ENCODE measurements at regions of chr10 and their contacts with region 1.

Region 1: DNA sequence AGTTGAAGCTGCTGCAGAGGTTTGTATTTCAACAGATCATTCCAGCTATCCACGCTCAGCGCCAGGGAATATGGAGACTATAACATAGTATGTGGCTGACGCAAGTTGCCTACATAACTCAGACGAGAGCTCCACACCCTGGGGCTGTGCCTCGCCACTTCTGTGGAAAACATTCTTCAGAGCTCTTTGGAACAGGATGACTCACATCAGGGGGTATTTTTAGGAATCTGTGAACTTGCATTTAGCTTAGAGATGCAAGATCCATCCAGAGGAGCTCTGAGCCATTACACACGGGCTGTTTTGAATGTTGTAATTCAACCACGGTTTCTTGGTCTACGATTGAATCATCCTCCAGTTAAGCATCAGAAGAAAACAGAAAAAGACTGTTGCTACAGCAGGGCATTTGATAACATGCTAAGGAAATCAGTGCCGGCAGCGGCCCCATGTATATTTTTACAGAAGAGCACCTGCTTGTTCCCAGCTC is 481.5 kb upstream of the AKR1E2 start:
- DNase-seq: no peak
- H3K4me3 ChIP-seq: peak overlapping the region in 1 of 4 donors; percentile 1
- H3K27ac ChIP-seq: peak overlapping the region; percentile 71 to 83 (median 78)
- H3K4me1 ChIP-seq: peaks cover 21 to 32% (median 31%) of the 10 kb centered on the region in 4 donors
- H3K27me3 ChIP-seq: no peaks in the 10 kb centered on the region
- CTCF ChIP-seq: peak in 1 of 3 experiments; percentile 40
- EP300 ChIP-seq: peak; percentile 78
- POLR2A ChIP-seq: no peak

Region 2: GRCh38 chr10:4254101-4254994 is 90.2 kb before region 1 on chr10:
- intact Hi-C with region 1: loop called (anchors 5 kb)
- DNase-seq: no peak
- H3K4me3 ChIP-seq: no peak overlapping the region
- H3K27ac ChIP-seq: peak overlapping the region; percentile 40 to 72 (median 64)
- H3K4me1 ChIP-seq: peaks cover 0 to 28% (median 22%) of the 10 kb centered on the region in 4 donors
- H3K27me3 ChIP-seq: no peaks in the 10 kb centered on the region
- CTCF ChIP-seq: no peak
- EP300 ChIP-seq: no peak
- POLR2A ChIP-seq: no peak

Region 3: DNA sequence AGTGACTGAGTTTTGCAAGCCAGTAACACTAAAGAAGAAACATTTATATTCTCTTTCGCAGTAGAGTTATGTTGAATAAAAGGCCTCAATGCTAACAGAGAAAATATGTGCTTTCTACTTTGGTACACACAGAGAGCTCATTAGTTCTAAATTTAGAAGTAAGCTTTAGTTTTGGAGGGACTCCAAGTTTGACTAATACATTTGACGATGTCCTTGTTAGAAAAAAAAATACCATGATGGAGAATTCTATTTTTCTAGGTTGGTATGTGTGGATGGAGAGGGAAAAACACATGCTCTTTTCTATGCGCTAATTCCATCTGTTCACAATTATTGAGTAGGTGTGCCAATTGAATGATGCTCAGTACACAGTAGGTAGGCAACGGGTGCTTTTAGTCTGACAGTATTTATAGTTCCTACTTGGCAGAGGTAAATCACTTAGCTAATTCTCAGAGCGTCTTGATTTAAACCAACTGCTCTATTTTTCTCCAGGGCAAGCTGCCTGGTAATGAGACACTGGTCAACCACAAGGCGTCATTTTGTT is 154.2 kb after region 1 on chr10:
- intact Hi-C with region 1: loop called (anchors 10 kb)
- DNase-seq: no peak
- H3K4me3 ChIP-seq: peak overlapping the region in 1 of 4 donors; percentile 0
- H3K27ac ChIP-seq: peak overlapping the region; percentile 83 to 88 (median 86)
- H3K4me1 ChIP-seq: peaks cover 7 to 42% (median 35%) of the 10 kb centered on the region in 4 donors
- H3K27me3 ChIP-seq: no peaks in the 10 kb centered on the region
- CTCF ChIP-seq: no peak
- EP300 ChIP-seq: no peak
- POLR2A ChIP-seq: no peak